GM18951 (cell line): ENCODE measurements at regions of chr5 and their contacts with region 1.

Region 1: DNA sequence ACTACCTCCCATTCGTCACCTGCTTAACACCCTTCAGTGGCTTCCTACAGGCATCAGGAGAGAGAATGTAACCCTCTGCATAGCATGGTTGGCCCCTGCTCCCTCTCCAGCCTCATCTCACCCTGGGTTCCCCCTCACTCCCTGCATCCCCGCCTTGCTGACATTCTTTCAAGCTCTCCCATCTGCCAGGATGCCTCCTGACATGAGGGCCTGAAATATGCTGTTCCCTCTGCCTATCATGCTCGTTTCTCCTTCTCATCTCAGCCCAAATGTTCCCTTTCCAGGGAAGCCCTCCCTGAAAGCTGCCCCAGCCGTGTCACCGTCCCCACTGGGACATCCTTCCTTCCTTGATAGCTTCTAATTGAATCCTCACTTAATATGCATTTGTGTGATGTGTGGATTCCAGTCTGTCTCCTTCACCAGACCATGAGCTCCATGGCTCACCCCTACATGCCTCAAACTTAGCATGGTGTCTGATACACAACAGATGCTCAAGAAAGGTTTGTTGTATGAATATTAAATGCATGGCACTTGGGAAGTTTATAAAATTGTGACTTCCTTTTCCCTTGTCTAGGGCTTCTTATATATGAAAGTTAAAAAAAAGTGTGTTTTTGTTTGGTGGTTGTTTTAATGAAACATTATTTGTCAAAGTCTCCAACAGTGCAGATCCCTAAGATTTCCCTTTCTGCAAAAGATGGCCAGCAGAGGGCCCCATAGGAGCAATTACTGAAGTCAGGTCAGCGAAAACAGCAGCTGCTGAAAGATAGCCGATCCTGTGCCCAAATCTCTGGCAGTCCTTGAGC is 7.3 kb upstream of the C5orf58 start:
- POLR2A ChIP-seq: no peak

Region 2: GRCh38 chr5:169668732-169669131 is 556.8 kb before region 1 on chr5:
- in situ Hi-C with region 1: no loop called
- POLR2A ChIP-seq: no peak

Region 3: DNA sequence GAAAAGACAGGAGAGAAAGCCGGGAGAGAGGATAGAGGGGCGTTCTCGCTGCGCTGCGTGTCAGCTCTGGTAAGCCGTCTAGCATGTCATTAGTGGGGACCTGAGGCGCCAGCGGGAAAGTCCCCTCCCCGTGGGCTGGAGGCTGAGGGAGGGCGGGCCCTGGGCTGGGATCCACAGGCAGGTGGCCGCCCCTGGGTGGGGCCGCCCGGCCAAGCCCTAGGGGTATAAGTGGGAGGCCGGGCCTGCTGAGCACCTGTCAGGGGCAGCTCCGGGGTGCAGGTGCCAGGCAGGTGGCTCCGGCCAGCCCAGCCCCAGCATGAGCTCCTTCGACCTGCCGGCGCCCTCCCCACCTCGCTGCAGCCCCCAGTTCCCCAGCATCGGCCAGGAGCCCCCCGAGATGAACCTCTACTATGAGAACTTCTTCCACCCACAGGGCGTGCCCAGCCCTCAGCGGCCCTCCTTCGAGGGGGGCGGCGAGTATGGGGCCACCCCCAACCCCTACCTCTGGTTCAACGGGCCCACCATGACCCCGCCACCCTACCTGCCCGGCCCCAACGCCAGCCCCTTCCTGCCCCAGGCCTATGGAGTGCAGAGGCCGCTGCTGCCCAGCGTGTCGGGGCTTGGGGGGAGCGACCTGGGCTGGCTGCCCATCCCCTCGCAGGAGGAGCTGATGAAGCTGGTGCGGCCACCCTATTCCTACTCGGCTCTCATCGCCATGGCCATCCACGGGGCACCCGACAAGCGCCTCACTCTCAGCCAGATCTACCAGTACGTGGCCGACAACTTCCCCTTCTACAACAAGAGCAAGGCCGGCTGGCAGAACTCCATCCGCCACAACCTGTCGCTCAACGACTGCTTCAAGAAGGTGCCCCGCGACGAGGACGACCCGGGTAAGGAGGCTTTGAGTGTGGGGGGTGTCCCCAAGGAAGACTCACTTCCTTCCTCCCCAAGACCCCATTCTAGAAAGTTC is 119.6 kb before region 1 on chr5 and contains the start of gene FOXI1:
- in situ Hi-C with region 1: no loop called
- POLR2A ChIP-seq: no peak

Region 4: GRCh38 chr5:170420780-170421412 is 195.4 kb after region 1 on chr5:
- in situ Hi-C with region 1: loop called (anchors 10 kb)
- POLR2A ChIP-seq: no peak

Region 5: GRCh38 chr5:170603578-170604565 is 378.3 kb after region 1 on chr5:
- in situ Hi-C with region 1: loop called (anchors 25 kb)
- POLR2A ChIP-seq: no peak